HAP-1 (cell line): ENCODE measurements at regions of chr2 and their contacts with region 1.

Region 1: DNA sequence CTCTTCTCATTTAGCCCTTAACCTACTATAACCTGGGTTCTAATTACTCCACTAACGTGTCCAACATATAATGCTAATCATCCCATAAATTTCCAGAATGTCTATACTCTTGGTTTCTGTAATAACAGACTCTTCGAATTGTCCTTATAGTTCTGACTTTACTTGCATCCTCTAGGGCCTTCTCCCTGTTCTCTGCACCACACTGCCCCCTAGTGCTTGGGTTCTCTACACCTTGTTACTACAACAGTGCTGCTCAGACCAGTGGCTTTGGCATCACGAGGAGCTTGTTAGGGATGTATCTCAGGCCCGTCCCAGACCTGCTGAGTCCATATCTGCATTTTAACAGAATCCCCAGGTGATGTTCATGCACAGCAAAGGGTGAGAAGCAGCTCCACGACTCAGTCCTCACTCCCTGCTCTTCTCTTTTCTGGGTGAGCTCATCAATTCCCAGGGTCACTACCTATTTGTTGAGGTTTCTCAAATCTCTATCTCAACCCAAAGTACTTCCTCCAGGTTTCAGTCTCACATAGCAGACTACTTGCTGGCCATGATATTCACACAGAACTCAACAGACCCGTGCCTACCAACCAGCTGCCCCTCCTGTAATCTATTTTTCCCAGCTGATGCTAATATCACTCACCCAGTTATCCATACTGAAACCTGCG is 14.5 kb upstream of the DDX1 start:
- DNase-seq: peak; percentile 60 to 97
- H3K4me3 ChIP-seq: no peak overlapping the region
- H3K4me1 ChIP-seq: no peaks in the 10 kb centered on the region
- H3K27me3 ChIP-seq: no peaks in the 10 kb centered on the region

Region 2: DNA sequence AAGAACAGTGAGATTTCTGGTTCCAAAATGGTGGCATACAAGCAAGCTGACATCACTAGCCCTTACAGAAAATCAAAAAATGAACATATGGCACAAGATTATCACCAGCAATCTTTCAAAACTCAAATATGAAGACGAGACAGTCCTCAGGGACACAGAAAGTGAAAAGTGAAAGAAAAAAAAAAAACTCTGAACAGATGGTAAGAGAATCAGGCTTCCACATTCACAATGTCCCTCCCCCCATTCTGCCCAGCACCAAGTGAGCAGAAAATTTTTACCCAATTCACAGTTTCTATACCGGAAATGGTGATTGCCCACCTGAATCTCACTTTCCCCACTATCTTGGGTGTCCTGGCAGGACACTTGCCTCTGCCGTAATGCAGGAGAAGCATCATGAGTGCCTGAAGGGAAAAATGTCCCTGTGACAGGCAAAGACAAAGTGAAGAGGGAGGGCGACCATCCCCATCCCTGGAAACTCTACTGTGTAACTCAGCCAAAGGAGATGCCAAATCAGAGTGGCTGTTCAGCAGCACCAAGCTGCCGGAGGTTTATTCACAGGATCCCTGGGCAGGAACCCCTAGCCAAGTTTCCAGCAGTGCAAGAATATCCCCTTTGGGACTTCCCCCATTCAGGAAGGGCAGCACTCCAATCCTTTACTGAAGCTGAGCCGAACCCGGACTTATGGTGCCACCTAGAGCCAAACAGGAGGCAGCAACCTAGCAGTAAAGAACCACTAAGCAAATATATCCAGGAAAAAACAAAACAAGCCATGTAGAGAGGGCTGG is 632.4 kb before region 1 on chr2:
- in situ Hi-C with region 1: loop called (anchors 25 kb)
- DNase-seq: peak; percentile 70
- H3K4me3 ChIP-seq: no peak overlapping the region
- H3K4me1 ChIP-seq: peaks cover 3% of the 10 kb centered on the region; the same call in 1 of the 2 replicates
- H3K27me3 ChIP-seq: no peaks in the 10 kb centered on the region